ENCODE measurements at regions of chr19 and their contacts with region 1.

Region 1: GRCh38 chr19:4505897-4506744 is 12.2 kb downstream of the PLIN4 start:
- DNase-seq: no peak
- ATAC-seq: no peak
- H3K4me3 ChIP-seq: no peak overlapping the region
- H3K27ac ChIP-seq: no peak overlapping the region
- H3K4me1 ChIP-seq: no peaks in the 10 kb centered on the region
- CTCF ChIP-seq: no peak
- EP300 ChIP-seq: no peak
- POLR2A ChIP-seq: no peak
- RAD21 ChIP-seq: no peak

Region 2: GRCh38 chr19:4524808-4525562 is 18.9 kb after region 1 on chr19:
- CTCF ChIA-PET with region 1: interaction called, 23 read pairs
- POLR2A ChIA-PET with region 1: no interaction called
- DNase-seq: peak; percentile 51 to 63
- ATAC-seq: peak; percentile 82 to 84
- H3K4me3 ChIP-seq: no peak overlapping the region
- H3K27ac ChIP-seq: no peak overlapping the region
- H3K4me1 ChIP-seq: peaks cover 5% of the 10 kb centered on the region; the same call in 1 of the 3 replicates
- CTCF ChIP-seq: peak; percentile 54
- EP300 ChIP-seq: no peak
- POLR2A ChIP-seq: no peak
- RAD21 ChIP-seq: peak; percentile 34; a peak in 4 of 5 replicates

Measured in A549 (cell line).